IMR-90 (cell line): ENCODE measurements at regions of chr14 and their contacts with region 1.

Region 1: DNA sequence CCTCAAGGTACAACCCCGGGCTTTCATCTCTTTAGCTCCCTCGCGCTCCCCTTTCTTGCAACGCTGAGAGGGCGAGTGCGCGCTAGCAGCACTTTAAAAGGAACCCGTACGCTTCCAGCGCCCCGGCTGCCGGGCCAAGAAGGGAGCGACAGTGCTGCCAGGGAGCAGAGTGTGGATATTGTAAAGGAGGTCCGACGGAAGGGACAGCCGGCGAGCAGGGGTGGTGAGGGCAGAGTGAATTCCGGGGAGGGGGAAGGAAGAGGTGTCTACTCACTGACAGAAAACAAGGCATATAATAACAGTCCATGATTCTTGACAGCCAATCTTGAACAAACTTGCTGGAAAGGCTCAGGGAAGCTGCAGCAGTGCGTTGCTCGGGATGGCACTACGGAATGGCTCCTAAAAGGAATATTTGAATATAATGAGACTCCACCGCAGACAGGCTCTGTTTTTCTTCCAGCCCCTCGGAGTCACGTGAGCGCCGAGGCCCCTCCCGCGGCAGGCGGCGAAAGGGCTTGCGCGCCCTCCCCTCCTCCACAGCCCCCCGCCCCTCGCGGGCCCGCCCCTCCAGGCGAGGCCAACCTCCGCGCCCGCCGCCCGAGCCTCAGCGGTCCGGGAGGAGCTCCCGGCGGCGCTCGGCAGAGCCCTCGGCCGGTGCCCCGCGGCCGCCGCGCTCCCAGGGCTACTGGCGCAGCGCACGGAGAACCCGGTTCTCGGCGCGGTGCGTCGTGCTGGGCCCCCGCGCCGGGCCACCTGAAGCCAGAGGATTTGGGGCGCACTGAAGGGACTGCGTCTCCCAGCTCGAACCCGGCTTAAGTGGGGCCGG is 3.4 kb downstream of the BMP4 start:
- DNase-seq: peak; percentile 74
- ATAC-seq: peak; percentile 81
- H3K4me3 ChIP-seq: peak overlapping the region; percentile 58
- H3K27ac ChIP-seq: peak overlapping the region; percentile 96
- H3K4me1 ChIP-seq: peaks cover 4% of the 10 kb centered on the region; the same call in 1 of the 2 replicates
- H3K27me3 ChIP-seq: peaks cover 15% of the 10 kb centered on the region
- CTCF ChIP-seq: no peak
- POLR2A ChIP-seq: no peak
- RAD21 ChIP-seq: no peak

Region 2: GRCh38 chr14:53306267-53306721 is 646.9 kb before region 1 on chr14:
- CTCF ChIA-PET with region 1: no interaction called
- POLR2A ChIA-PET with region 1: interaction called, 5 read pairs
- dilution Hi-C with region 1: no loop called
- in situ Hi-C with region 1: no loop called
- intact Hi-C with region 1: loop called (anchors 5 kb)
- DNase-seq: peak; percentile 69
- ATAC-seq: peak; percentile 78
- H3K4me3 ChIP-seq: peak overlapping the region; percentile 56
- H3K27ac ChIP-seq: peak overlapping the region; percentile 38; the same call in 1 of the 2 replicates
- H3K4me1 ChIP-seq: peaks cover 10% of the 10 kb centered on the region
- H3K27me3 ChIP-seq: no peaks in the 10 kb centered on the region; the same call in 1 of the 2 replicates
- CTCF ChIP-seq: peak; percentile 80
- POLR2A ChIP-seq: no peak
- RAD21 ChIP-seq: peak; percentile 79

Region 3: GRCh38 chr14:53539489-53540126 is 413.6 kb before region 1 on chr14:
- CTCF ChIA-PET with region 1: interaction called, 3 read pairs
- POLR2A ChIA-PET with region 1: interaction called, 8 read pairs
- dilution Hi-C with region 1: no loop called
- in situ Hi-C with region 1: loop called (anchors 10 kb)
- intact Hi-C with region 1: loop called (anchors 1 kb)
- DNase-seq: peak; percentile 83
- ATAC-seq: peak; percentile 77
- H3K4me3 ChIP-seq: no peak overlapping the region
- H3K27ac ChIP-seq: peak overlapping the region; percentile 64; the same call in 1 of the 2 replicates
- H3K4me1 ChIP-seq: peaks cover 20% of the 10 kb centered on the region
- H3K27me3 ChIP-seq: no peaks in the 10 kb centered on the region
- CTCF ChIP-seq: peak; percentile 90
- POLR2A ChIP-seq: no peak
- RAD21 ChIP-seq: peak; percentile 89

Region 4: GRCh38 chr14:53814392-53814791 is 138.8 kb before region 1 on chr14:
- CTCF ChIA-PET with region 1: no interaction called
- POLR2A ChIA-PET with region 1: interaction called, 3 read pairs
- dilution Hi-C with region 1: no loop called
- in situ Hi-C with region 1: no loop called
- intact Hi-C with region 1: loop called (anchors 5 kb)
- DNase-seq: no peak
- ATAC-seq: peak; percentile 68
- H3K4me3 ChIP-seq: no peak overlapping the region
- H3K27ac ChIP-seq: peak overlapping the region; percentile 13; the same call in 1 of the 2 replicates
- H3K4me1 ChIP-seq: peaks cover 3% of the 10 kb centered on the region; the same call in 1 of the 2 replicates
- H3K27me3 ChIP-seq: peaks cover 2% of the 10 kb centered on the region; the same call in 1 of the 2 replicates
- CTCF ChIP-seq: no peak
- POLR2A ChIP-seq: no peak
- RAD21 ChIP-seq: no peak

Region 5: GRCh38 chr14:53999061-53999488 is 45.9 kb after region 1 on chr14:
- CTCF ChIA-PET with region 1: no interaction called
- POLR2A ChIA-PET with region 1: no interaction called
- dilution Hi-C with region 1: no loop called
- in situ Hi-C with region 1: no loop called
- intact Hi-C with region 1: no loop called
- DNase-seq: peak; percentile 76
- ATAC-seq: peak; percentile 93
- H3K4me3 ChIP-seq: no peak overlapping the region
- H3K27ac ChIP-seq: peak overlapping the region; percentile 84
- H3K4me1 ChIP-seq: peaks cover 19% of the 10 kb centered on the region
- H3K27me3 ChIP-seq: no peaks in the 10 kb centered on the region
- CTCF ChIP-seq: no peak
- POLR2A ChIP-seq: no peak
- RAD21 ChIP-seq: no peak

Region 6: DNA sequence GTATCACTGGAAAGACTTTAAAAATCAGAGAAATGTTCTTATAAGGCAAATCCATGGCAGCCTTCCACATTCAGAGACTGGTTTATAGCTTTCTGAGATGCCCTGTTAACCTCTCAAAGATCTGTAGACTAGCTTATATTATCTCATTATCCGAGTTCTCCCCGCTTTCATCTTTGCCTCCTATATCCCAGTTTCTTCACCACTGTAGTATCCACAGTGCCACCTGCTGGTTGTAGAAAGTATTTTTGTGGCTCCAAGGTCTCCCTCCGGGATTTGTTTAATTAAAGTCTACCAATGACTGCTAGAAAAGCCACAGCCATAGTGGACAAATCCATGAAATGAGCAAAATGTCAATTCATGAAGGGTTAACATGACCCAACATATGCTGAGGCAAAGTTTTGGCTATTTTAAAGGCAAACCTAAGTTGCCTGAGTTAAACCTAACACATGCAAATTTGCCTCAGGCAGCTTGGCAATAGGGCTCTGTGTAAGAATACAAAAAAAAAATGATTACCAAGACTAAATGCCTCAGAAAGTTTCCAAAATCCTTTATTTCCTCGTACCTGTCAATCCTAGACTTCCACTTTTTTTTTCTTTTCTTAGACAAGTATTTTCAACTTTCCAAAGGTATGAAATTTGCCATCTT is 222.2 kb after region 1 on chr14:
- CTCF ChIA-PET with region 1: interaction called, 6 read pairs
- POLR2A ChIA-PET with region 1: interaction called, 6 read pairs
- dilution Hi-C with region 1: no loop called
- in situ Hi-C with region 1: no loop called
- intact Hi-C with region 1: loop called (anchors 1 kb)
- DNase-seq: peak; percentile 73
- ATAC-seq: peak; percentile 83
- H3K4me3 ChIP-seq: no peak overlapping the region
- H3K27ac ChIP-seq: no peak overlapping the region
- H3K4me1 ChIP-seq: peaks cover 9% of the 10 kb centered on the region; the same call in 1 of the 2 replicates
- H3K27me3 ChIP-seq: peaks cover 8% of the 10 kb centered on the region
- CTCF ChIP-seq: peak; percentile 84
- POLR2A ChIP-seq: no peak
- RAD21 ChIP-seq: peak; percentile 81

Region 7: GRCh38 chr14:54338696-54339317 is 385.6 kb after region 1 on chr14:
- CTCF ChIA-PET with region 1: no interaction called
- POLR2A ChIA-PET with region 1: interaction called, 8 read pairs
- dilution Hi-C with region 1: no loop called
- in situ Hi-C with region 1: no loop called
- intact Hi-C with region 1: loop called (anchors 2 kb)
- DNase-seq: peak; percentile 57
- ATAC-seq: peak; percentile 78
- H3K4me3 ChIP-seq: no peak overlapping the region
- H3K27ac ChIP-seq: no peak overlapping the region
- H3K4me1 ChIP-seq: no peaks in the 10 kb centered on the region; the same call in 1 of the 2 replicates
- H3K27me3 ChIP-seq: peaks cover 9% of the 10 kb centered on the region
- CTCF ChIP-seq: peak; percentile 63
- POLR2A ChIP-seq: no peak
- RAD21 ChIP-seq: peak; percentile 77